Activated B cell treated with CpG ODN at 0.5 μM for 24 hours (primary cell): ENCODE measurements at regions of chr1 and their contacts with region 1.

Region 1: GRCh38 chr1:161153679-161154426 is at the start of gene UFC1:
- DNase-seq: peak; percentile 66
- ATAC-seq: peak; percentile 94
- H3K4me3 Mint-ChIP-seq: peak within 1 kb of the TSS; percentile 99
- H3K27ac Mint-ChIP-seq: peak within 1 kb of the TSS; percentile 100
- H3K4me1 Mint-ChIP-seq: peaks cover 21% of the 10 kb centered on the region
- H3K27me3 Mint-ChIP-seq: no peaks in the 10 kb centered on the region
- CTCF ChIP-seq: no peak
- total RNA-seq, gene UFC1: 107 and 127 TPM in 2 replicates

Region 2: DNA sequence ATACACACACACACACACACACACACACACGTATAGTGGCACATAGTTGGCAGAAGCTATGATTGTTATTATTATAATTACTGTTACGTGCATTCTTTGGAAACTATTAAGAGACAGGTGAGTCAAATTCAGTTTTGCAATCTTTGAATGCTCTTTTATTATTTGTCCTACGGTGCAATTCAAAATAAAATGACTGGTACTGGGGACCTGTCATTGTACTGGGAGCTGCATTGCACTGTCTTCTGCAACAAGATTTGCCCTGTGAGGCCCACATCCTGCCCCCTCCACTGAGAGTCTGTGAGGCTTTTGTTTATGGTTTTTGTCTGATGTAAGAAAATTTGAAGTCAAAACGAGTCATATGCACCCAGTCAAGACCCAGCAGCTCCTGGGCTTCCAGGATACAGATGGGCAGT is 356.0 kb before region 1 on chr1:
- CTCF ChIA-PET with region 1: no interaction called
- POLR2A ChIA-PET with region 1: no interaction called
- intact Hi-C with region 1: no loop called
- DNase-seq: no peak
- ATAC-seq: peak; percentile 20
- H3K4me3 Mint-ChIP-seq: peak overlapping the region; percentile 95
- H3K27ac Mint-ChIP-seq: peak overlapping the region; percentile 99
- H3K4me1 Mint-ChIP-seq: peaks cover 85% of the 10 kb centered on the region
- H3K27me3 Mint-ChIP-seq: no peaks in the 10 kb centered on the region
- CTCF ChIP-seq: no peak

Region 3: GRCh38 chr1:160904783-160905616 is 248.9 kb before region 1 on chr1:
- CTCF ChIA-PET with region 1: no interaction called
- POLR2A ChIA-PET with region 1: interaction called, 10 read pairs
- intact Hi-C with region 1: no loop called
- DNase-seq: no peak
- ATAC-seq: no peak
- H3K4me3 Mint-ChIP-seq: no peak overlapping the region
- H3K27ac Mint-ChIP-seq: peak overlapping the region; percentile 1
- H3K4me1 Mint-ChIP-seq: no peaks in the 10 kb centered on the region
- H3K27me3 Mint-ChIP-seq: peaks cover 3% of the 10 kb centered on the region
- CTCF ChIP-seq: no peak

Region 4: GRCh38 chr1:161177112-161177935 is 23.5 kb after region 1 on chr1 and contains the start of gene B4GALT3:
- CTCF ChIA-PET with region 1: interaction called, 3 read pairs
- POLR2A ChIA-PET with region 1: interaction called, 12 read pairs
- intact Hi-C with region 1: no loop called
- DNase-seq: peak; percentile 99
- ATAC-seq: peak; percentile 90
- H3K4me3 Mint-ChIP-seq: peak within 1 kb of the TSS; percentile 99
- H3K27ac Mint-ChIP-seq: peak within 1 kb of the TSS; percentile 99
- H3K4me1 Mint-ChIP-seq: peaks cover 64% of the 10 kb centered on the region
- H3K27me3 Mint-ChIP-seq: no peaks in the 10 kb centered on the region
- CTCF ChIP-seq: no peak
- total RNA-seq, gene B4GALT3: 40.7 and 41.7 TPM in 2 replicates